ENCODE measurements at regions of chr11 and their contacts with region 1.

Region 1: GRCh38 chr11:17352950-17353820 is 1.6 kb downstream of the NCR3LG1 start:
- DNase-seq: peak; percentile 61
- ATAC-seq: peak; percentile 56
- H3K4me3 Mint-ChIP-seq: peak overlapping the region; percentile 91
- H3K27ac Mint-ChIP-seq: peak overlapping the region; percentile 82
- H3K4me1 Mint-ChIP-seq: peaks cover 28% of the 10 kb centered on the region
- H3K27me3 Mint-ChIP-seq: peaks cover 12% of the 10 kb centered on the region

Region 2: DNA sequence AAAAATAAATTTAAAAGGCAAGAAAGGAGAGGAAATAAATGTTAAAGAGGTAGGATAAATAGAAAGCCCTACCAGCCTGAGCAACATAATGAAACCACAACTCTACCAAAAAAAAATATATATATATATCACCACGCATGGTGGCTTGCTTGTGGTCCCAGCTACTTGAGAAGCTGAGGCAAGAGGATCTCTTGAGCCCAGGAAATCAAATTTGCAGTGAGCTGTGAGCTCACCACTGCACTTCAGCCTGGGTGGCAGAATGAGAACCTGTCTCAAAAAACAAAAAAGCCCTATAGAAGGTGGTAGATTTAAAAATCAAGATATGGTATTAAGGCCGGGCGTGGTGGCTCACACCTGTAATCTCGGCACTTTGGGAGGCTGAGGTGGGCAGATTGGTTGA is 66.1 kb before region 1 on chr11:
- POLR2A ChIA-PET with region 1: interaction called, 10 read pairs
- DNase-seq: no peak
- ATAC-seq: peak; percentile 62
- H3K4me3 Mint-ChIP-seq: peak overlapping the region; percentile 26
- H3K27ac Mint-ChIP-seq: peak overlapping the region; percentile 32
- H3K4me1 Mint-ChIP-seq: peaks cover 37% of the 10 kb centered on the region
- H3K27me3 Mint-ChIP-seq: no peaks in the 10 kb centered on the region

Region 3: GRCh38 chr11:17394743-17395390 is 41.7 kb after region 1 on chr11:
- POLR2A ChIA-PET with region 1: no interaction called
- DNase-seq: no peak
- ATAC-seq: no peak
- H3K4me3 Mint-ChIP-seq: no peak overlapping the region
- H3K27ac Mint-ChIP-seq: no peak overlapping the region
- H3K4me1 Mint-ChIP-seq: peaks cover 8% of the 10 kb centered on the region
- H3K27me3 Mint-ChIP-seq: peaks cover 15% of the 10 kb centered on the region

Region 4: GRCh38 chr11:17405232-17406005 is 52.2 kb after region 1 on chr11:
- POLR2A ChIA-PET with region 1: no interaction called
- DNase-seq: no peak
- ATAC-seq: no peak
- H3K4me3 Mint-ChIP-seq: no peak overlapping the region
- H3K27ac Mint-ChIP-seq: no peak overlapping the region
- H3K4me1 Mint-ChIP-seq: peaks cover 10% of the 10 kb centered on the region
- H3K27me3 Mint-ChIP-seq: peaks cover 7% of the 10 kb centered on the region